ENCODE measurements at regions of chr1 and their contacts with region 1.

Region 1: DNA sequence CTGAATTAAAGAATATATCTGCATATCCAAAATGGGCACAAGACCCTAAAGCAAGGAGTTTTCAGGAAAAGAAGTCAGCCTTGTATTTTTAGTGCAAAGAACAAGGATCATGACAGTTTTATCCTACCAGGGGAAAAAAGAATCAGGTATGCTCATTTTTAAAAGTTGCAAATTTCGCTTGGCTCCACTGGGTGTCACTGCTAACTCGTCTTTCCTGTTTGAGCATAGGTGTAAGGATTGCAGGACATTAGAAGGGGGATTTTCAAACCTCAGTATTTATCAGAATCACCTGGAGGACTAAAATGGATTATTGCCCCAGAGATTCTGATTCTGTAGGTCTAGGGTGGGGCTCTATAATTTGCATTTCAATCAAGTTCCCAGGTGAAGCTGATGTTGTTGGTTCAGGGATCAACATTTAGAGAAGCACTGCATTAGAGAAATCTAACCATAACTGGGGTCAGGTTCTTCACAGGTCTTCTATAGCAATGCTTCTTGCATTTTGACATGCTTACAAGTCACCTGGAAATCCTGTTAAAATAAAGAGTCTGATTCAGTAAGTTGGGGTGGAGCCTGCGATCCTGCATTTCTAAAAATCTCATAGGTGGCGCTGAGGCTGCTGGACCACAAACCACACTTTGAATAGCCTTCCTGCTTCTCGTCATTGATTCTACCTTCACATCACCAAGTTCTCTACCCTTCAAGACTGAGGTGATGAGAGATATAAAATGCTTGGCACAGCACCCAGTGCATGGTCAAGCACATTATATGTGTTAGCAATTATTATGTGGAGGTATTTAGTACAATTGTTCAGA is 39.6 kb downstream of the NUF2 start:
- DNase-seq: peak in 1 of 2 experiments; percentile 37
- H3K4me3 ChIP-seq: no peak overlapping the region
- H3K27ac ChIP-seq: no peak overlapping the region
- H3K4me1 ChIP-seq: no peaks in the 10 kb centered on the region
- H3K27me3 ChIP-seq: no peaks in the 10 kb centered on the region
- CTCF ChIP-seq: no peak; the same call in 1 of the 2 replicates

Region 2: GRCh38 chr1:163278602-163279001 is 82.7 kb before region 1 on chr1:
- CTCF ChIA-PET with region 1: no interaction called
- POLR2A ChIA-PET with region 1: no interaction called
- intact Hi-C with region 1: no loop called
- DNase-seq: no peak
- H3K4me3 ChIP-seq: no peak overlapping the region
- H3K27ac ChIP-seq: no peak overlapping the region
- H3K4me1 ChIP-seq: no peaks in the 10 kb centered on the region
- H3K27me3 ChIP-seq: no peaks in the 10 kb centered on the region
- CTCF ChIP-seq: no peak

Region 3: DNA sequence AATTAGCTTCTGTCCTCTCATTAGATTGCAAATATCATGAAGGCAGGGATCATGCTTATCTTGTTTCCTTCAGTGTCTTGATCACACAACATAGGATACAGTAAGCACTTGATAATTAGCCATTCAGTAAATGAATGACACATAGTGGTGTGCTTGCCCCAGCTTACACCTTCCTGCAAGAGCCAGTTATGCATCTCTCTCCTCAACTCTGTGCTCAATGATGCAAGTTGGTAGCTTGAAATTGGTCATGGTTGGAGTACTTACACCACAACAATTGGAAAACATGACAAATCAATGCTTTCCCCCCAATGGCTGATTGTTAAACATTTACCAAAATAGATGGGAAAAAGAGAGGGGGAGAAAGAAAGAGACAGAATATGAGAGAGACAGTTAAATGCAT is 89.7 kb after region 1 on chr1:
- CTCF ChIA-PET with region 1: interaction called, 13 read pairs
- POLR2A ChIA-PET with region 1: no interaction called
- intact Hi-C with region 1: no loop called
- DNase-seq: no peak
- H3K4me3 ChIP-seq: no peak overlapping the region
- H3K27ac ChIP-seq: no peak overlapping the region
- H3K4me1 ChIP-seq: no peaks in the 10 kb centered on the region
- H3K27me3 ChIP-seq: no peaks in the 10 kb centered on the region; the same call in 1 of the 2 replicates
- CTCF ChIP-seq: no peak

Region 4: GRCh38 chr1:163528710-163529348 is 167.5 kb after region 1 on chr1:
- CTCF ChIA-PET with region 1: no interaction called
- POLR2A ChIA-PET with region 1: no interaction called
- intact Hi-C with region 1: loop called (anchors 5 kb)
- DNase-seq: no peak
- H3K4me3 ChIP-seq: no peak overlapping the region
- H3K27ac ChIP-seq: no peak overlapping the region
- H3K4me1 ChIP-seq: no peaks in the 10 kb centered on the region
- H3K27me3 ChIP-seq: no peaks in the 10 kb centered on the region
- CTCF ChIP-seq: peak; percentile 83

Measured in PC-9 (cell line).